ENCODE measurements at regions of chr22 and their contacts with region 1.

Region 1: GRCh38 chr22:30485362-30485988 is 13.7 kb upstream of the SEC14L3 start:
- DNase-seq: peak; percentile 56 to 81 (median 76)
- ATAC-seq: peak; percentile 86 to 91
- H3K4me3 ChIP-seq: no peak overlapping the region
- H3K27ac ChIP-seq: no peak overlapping the region
- H3K4me1 ChIP-seq: no peaks in the 10 kb centered on the region
- H3K27me3 ChIP-seq: no peaks in the 10 kb centered on the region

Region 2: GRCh38 chr22:30104501-30105156 is 380.8 kb before region 1 on chr22:
- intact Hi-C with region 1: loop called in 1 of 4 experiments (anchors 10 kb)
- DNase-seq: no peak
- ATAC-seq: no peak
- H3K4me3 ChIP-seq: no peak overlapping the region
- H3K27ac ChIP-seq: no peak overlapping the region
- H3K4me1 ChIP-seq: no peaks in the 10 kb centered on the region
- H3K27me3 ChIP-seq: no peaks in the 10 kb centered on the region

Region 3: GRCh38 chr22:30262917-30263741 is 222.3 kb before region 1 on chr22:
- intact Hi-C with region 1: loop called in 1 of 4 experiments (anchors 10 kb)
- DNase-seq: peak; percentile 75 to 93 (median 88)
- ATAC-seq: peak in 1 of 2 donors; percentile 56
- H3K4me3 ChIP-seq: no peak overlapping the region
- H3K27ac ChIP-seq: no peak overlapping the region
- H3K4me1 ChIP-seq: no peaks in the 10 kb centered on the region
- H3K27me3 ChIP-seq: no peaks in the 10 kb centered on the region

Region 4: DNA sequence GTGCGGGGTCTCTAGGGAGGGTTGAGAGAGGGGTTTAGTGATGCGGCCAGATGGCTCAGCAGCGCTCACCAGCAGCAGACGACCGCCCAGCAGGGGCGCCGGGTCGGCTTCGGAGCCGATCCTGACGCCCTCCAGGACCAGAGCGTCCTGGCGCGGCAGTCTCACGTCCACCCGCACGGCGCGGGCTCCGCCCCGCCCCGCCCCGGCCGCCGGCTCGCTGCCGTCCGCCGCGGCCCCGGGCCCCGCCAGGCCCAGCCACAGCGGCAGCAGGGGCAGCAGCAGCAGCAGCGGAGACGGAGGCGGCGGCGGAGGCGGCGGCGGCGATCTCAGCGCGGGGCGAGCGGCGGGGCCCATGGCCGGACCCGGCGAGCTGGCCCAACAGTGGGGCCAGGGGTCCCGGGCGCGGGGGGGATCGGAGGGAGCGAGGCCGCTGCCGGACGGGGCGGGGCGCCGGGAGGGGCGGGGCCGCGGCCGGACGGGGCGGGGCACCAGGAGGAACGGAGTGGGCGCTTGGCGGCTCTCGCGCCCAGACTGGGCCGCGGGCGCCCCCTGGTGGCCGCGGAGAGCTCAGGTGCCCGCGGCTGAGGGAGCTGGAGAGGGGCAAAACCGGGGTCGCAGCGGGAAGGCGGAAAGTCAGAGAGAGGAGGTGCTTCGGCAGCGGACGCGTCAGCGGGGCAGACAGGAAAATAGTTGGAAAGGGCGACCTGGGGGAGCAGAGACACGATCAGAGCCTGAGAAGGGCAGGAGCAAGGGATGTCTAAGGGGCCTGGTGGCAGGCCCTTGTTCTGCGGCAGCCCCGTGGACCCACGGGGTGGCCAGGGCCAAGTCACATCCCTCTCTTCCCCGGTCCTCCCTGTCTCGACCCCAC is 98.3 kb before region 1 on chr22 and contains the start of gene RNF215:
- intact Hi-C with region 1: loop called in 2 of 4 experiments (anchors 5 to 10 kb)
- DNase-seq: peak; percentile 81 to 95 (median 93)
- ATAC-seq: peak; percentile 90 to 94
- H3K4me3 ChIP-seq: peak within 1 kb of the TSS; percentile 85
- H3K27ac ChIP-seq: peak within 1 kb of the TSS; percentile 69
- H3K4me1 ChIP-seq: peaks cover 2% of the 10 kb centered on the region
- H3K27me3 ChIP-seq: no peaks in the 10 kb centered on the region
- total RNA-seq, gene RNF215: 8.7 to 17.0 (median 12.7) TPM

Region 5: GRCh38 chr22:30396871-30397655 is 88.4 kb before region 1 on chr22 and contains the start of gene SEC14L2:
- intact Hi-C with region 1: loop called in 3 of 4 experiments (anchors 5 to 10 kb)
- DNase-seq: peak; percentile 77 to 92 (median 89)
- ATAC-seq: peak; percentile 78 to 86
- H3K4me3 ChIP-seq: peak within 1 kb of the TSS; percentile 60
- H3K27ac ChIP-seq: no peak within 1 kb of the TSS
- H3K4me1 ChIP-seq: no peaks in the 10 kb centered on the region
- H3K27me3 ChIP-seq: no peaks in the 10 kb centered on the region
- total RNA-seq, gene SEC14L2: 2.0 to 5.5 (median 3.5) TPM

Measured in right cardiac atrium (tissue), 5 donors.